ENCODE measurements at regions of chr5 and their contacts with region 1.

Region 1: GRCh38 chr5:125412561-125413495 is 666.4 kb upstream of the ZNF608 start:
- DNase-seq: peak; percentile 76 to 96 (median 89)

Region 2: GRCh38 chr5:125125031-125125823 is 287.6 kb before region 1 on chr5:
- intact Hi-C with region 1: no loop called
- DNase-seq: no peak

Region 3: DNA sequence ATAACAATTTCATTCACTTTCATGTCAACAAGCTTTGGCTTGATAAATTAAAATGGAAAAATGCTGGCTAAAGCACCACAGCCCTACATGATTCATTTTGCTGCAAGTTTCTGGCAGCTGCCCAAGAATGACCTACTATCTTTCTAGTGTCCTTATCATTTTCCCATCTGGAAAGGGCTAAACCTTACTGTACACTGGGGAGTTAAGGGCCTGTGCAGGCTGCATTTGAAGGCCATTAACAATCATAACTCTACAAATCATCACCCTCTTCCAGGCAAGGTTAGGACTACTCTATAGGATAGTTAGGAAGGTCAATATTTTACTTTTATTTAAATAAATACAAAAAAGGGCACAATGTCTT is 86.7 kb before region 1 on chr5:
- intact Hi-C with region 1: no loop called
- DNase-seq: peak in 3 of 42 donors; percentile 26 to 60 (median 36)

Region 4: GRCh38 chr5:125484742-125485641 is 72.2 kb after region 1 on chr5:
- intact Hi-C with region 1: loop called (anchors 5 kb)
- DNase-seq: peak; percentile 60 to 93 (median 82)

Region 5: DNA sequence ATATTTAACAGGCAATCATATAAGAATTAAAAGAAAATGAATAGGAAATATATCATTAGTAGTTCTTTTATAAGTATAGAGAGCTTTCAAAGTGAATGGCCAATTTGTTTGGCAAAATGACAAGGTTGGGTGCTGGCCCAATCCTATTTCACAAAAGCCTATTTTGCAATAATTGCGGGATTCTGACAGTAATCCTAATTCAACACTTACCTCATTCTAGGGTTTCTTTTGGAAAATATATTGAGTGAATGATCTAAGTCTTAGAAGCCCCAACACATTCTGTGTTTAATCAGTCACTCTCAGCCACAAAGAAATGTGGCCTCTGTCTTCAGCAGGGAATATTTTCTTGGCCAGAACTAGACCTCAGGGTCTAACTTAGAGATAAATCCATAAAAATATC is 169.5 kb after region 1 on chr5:
- intact Hi-C with region 1: loop called (anchors 10 kb)
- DNase-seq: no peak

Region 6: DNA sequence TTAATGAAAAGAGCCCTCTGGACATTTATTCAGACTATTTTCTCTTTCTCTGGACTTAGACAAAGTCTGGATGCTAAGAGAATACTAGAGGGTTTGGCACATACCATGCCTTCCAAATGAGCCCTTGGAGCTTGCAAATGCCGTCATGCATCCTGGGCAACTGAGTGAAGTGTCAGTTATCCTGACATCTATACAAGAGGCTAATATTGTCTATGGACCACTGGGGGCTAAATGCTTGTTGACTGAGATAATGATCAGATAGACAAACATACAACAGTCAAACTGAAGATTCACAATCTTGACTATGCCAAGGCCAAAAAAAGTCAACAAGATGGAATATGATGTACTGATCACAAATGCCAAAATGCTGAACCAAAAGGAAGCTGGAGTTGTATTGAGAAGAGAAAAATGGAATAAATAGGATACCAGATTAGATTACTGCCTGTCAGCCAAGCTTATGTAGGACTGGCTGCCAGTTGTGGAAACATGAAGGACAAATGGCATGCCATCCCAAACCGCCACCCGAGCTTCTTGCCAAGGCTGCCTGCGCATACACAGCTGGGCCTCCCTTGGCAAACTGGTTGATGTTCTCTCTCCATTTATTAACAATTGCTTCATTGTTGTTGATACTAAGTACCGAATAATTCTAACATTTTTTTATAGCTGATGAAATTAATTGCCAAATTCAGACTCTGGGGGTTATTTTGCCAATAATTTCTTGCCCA is 770.3 kb after region 1 on chr5:
- intact Hi-C with region 1: no loop called
- DNase-seq: peak; percentile 47 to 90 (median 78)

Measured in head of caudate nucleus (tissue), 42 donors.